ENCODE measurements at regions of chr10 and their contacts with region 1.

Region 1: DNA sequence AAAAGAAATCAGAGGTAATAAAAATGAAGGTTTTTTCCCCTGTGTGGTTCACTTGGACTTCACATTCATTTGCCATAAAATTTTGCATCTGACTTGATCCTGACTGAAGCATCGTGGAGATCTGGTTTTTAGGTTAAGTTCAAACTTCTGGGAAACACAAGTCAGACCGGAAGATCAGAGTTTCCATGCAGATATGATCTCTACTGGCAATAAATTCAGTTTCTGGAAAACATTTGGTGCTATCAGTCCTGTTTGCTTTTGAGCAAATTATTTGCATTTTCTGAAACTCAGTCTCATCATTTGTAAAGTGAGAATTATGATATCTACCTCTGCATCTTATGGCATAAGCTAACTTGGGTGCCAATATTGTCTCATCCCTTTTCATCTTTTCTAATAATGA is 81.3 kb upstream of the KCNMA1 start:
- DNase-seq: no peak
- ATAC-seq: no peak
- H3K4me3 ChIP-seq: no peak overlapping the region
- H3K27ac ChIP-seq: no peak overlapping the region
- H3K4me1 ChIP-seq: no peaks in the 10 kb centered on the region
- H3K27me3 ChIP-seq: peaks cover 0 to 14% (median 4%) of the 10 kb centered on the region in 9 donors
- CTCF ChIP-seq: no peak
- POLR2A ChIP-seq: no peak

Region 2: GRCh38 chr10:77756319-77757232 is 37.6 kb after region 1 on chr10:
- intact Hi-C with region 1: loop called in 2 of 10 experiments (anchors 1 to 2 kb)
- DNase-seq: no peak
- ATAC-seq: peak in 1 of 4 donors; percentile 41
- H3K4me3 ChIP-seq: no peak overlapping the region
- H3K27ac ChIP-seq: no peak overlapping the region
- H3K4me1 ChIP-seq: no peaks in the 10 kb centered on the region
- H3K27me3 ChIP-seq: peaks cover 0 to 5% (median 0%) of the 10 kb centered on the region in 9 donors
- CTCF ChIP-seq: peak; percentile 18 to 51 (median 32)
- POLR2A ChIP-seq: no peak